HAP-1 (cell line): ENCODE measurements at regions of chr20 and their contacts with region 1.

Region 1: GRCh38 chr20:50575847-50576720 is 65.9 kb downstream of the PTPN1 start:
- DNase-seq: peak; percentile 26 to 74
- H3K4me3 ChIP-seq: no peak overlapping the region
- H3K4me1 ChIP-seq: no peaks in the 10 kb centered on the region
- H3K27me3 ChIP-seq: no peaks in the 10 kb centered on the region

Region 2: GRCh38 chr20:50189681-50190582 is 386.2 kb before region 1 on chr20:
- in situ Hi-C with region 1: loop called (anchors 5 kb)
- DNase-seq: peak; percentile 74 to 93
- H3K4me3 ChIP-seq: peak overlapping the region; percentile 76
- H3K4me1 ChIP-seq: peaks cover 11% of the 10 kb centered on the region
- H3K27me3 ChIP-seq: no peaks in the 10 kb centered on the region